GM12878 (cell line): ENCODE measurements at regions of chr5 and their contacts with region 1.

Region 1: GRCh38 chr5:77972469-77973252 is 196.5 kb upstream of the TBCA start:
- DNase-seq: no peak
- ATAC-seq: peak; percentile 91
- H3K4me3 ChIP-seq: peak overlapping the region; percentile 61
- H3K27ac ChIP-seq: no peak overlapping the region
- H3K4me1 ChIP-seq: peaks cover 8% of the 10 kb centered on the region
- H3K27me3 ChIP-seq: 0 out of 4 replicates have a peak, but pooled peaks cover 0 to 4% of the 10 kb centered on the region in 2 experiments
- CTCF ChIP-seq: peak; percentile 50 to 53 (median 51); a peak in 5 of 6 replicates
- EP300 ChIP-seq: no peak
- POLR2A ChIP-seq: no peak
- RAD21 ChIP-seq: peak; percentile 76

Region 2: GRCh38 chr5:77645158-77645994 is 327.3 kb before region 1 on chr5:
- CTCF ChIA-PET with region 1: no interaction called
- POLR2A ChIA-PET with region 1: no interaction called
- RAD21 ChIA-PET with region 1: no interaction called
- SMC1A ChIA-PET with region 1: no interaction called
- in situ Hi-C with region 1: no loop called
- intact Hi-C with region 1: loop called (anchors 10 kb)
- DNase-seq: no peak
- ATAC-seq: peak; percentile 99
- H3K4me3 ChIP-seq: peak overlapping the region; percentile 53; the same call in 1 of the 2 replicates
- H3K27ac ChIP-seq: no peak overlapping the region
- H3K4me1 ChIP-seq: no peaks in the 10 kb centered on the region
- H3K27me3 ChIP-seq: peaks cover 3 to 26% of the 10 kb centered on the region in 2 experiments
- CTCF ChIP-seq: peak; percentile 51 to 55 (median 52); a peak in 5 of 6 replicates
- EP300 ChIP-seq: no peak
- POLR2A ChIP-seq: no peak
- RAD21 ChIP-seq: peak; percentile 67

Region 3: DNA sequence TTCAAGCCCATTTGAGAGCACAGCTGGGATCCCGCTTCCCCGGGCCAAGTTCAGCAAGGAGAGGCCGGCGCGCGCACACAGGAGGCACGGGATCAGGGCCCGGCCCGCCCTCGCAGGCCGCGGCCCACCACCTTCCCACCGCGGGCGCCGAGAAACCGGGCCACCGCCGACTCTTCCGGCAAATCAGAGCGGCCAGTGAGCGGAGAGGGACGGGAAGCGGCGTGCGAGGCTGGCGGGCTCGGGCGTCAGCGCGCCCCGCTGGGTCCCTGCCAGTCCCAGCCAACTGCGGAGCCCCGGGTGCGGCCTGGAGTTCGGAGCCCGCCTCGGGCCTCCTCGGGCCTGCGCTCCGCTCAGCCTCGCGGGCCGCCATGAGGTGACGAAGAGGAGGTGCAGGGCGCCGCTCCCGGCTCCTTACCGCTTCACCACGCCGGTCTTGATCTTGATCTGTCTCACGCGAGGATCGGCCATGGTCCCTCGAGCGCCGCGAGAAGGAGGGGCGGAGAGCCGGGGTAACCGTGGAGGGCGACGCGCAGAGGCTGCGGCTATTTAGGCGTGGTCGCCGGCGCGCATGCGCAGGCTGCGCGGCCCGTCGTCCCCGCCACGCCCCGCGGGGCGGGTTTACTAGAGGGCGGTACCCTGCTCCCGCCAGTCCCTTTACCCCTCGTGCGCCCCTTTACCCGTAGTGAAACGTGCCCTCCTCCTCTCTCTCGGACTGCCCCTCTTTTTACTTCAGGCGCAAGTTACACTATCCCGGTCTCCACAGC is 196.7 kb before region 1 on chr5 and contains the start of gene TBCA:
- CTCF ChIA-PET with region 1: no interaction called
- POLR2A ChIA-PET with region 1: no interaction called
- RAD21 ChIA-PET with region 1: interaction called, 3 read pairs
- SMC1A ChIA-PET with region 1: interaction called, 3 read pairs
- in situ Hi-C with region 1: no loop called
- intact Hi-C with region 1: loop called (anchors 10 kb)
- DNase-seq: peak; percentile 78
- ATAC-seq: peak; percentile 88
- H3K4me3 ChIP-seq: peak within 1 kb of the TSS; percentile 89
- H3K27ac ChIP-seq: peak within 1 kb of the TSS; percentile 95
- H3K4me1 ChIP-seq: peaks cover 4% of the 10 kb centered on the region; the same call in 1 of the 2 replicates
- H3K27me3 ChIP-seq: no peaks in the 10 kb centered on the region
- CTCF ChIP-seq: peak in 2 of 3 experiments; percentile 31 to 39; a peak in 3 of 6 replicates
- EP300 ChIP-seq: no peak; a peak in 1 of 4 replicates
- POLR2A ChIP-seq: peak; percentile 86
- RAD21 ChIP-seq: peak; percentile 27; the same call in 1 of the 2 replicates
- polyA plus RNA-seq, gene TBCA: 567 to 647 TPM

Region 4: DNA sequence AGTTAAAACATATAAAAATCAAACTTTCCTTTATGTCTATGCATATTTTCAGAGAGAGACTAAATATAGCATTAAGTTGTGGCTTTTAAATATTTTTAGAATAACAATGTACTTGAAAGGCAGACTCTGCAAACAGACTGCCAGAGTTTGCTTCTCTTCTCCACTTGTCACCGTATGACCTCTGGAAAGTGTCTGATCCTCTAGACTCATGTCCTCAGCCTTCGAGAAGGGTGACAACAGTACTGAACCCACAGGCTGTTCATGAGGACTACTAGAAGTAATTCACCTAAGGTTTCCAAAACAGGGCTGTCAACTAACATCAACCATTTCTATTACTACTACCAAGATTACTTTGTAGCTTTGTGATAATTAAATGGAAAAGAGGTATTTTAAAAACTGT is 28.8 kb before region 1 on chr5:
- CTCF ChIA-PET with region 1: interaction called, 11 read pairs
- POLR2A ChIA-PET with region 1: interaction called, 4 read pairs
- RAD21 ChIA-PET with region 1: interaction called, 3 read pairs
- SMC1A ChIA-PET with region 1: interaction called, 23 read pairs
- in situ Hi-C with region 1: no loop called
- intact Hi-C with region 1: no loop called
- DNase-seq: no peak
- ATAC-seq: no peak
- H3K4me3 ChIP-seq: no peak overlapping the region
- H3K27ac ChIP-seq: no peak overlapping the region
- H3K4me1 ChIP-seq: no peaks in the 10 kb centered on the region
- H3K27me3 ChIP-seq: no peaks in the 10 kb centered on the region; a peak in 1 of 4 replicates
- CTCF ChIP-seq: no peak
- EP300 ChIP-seq: no peak
- POLR2A ChIP-seq: no peak
- RAD21 ChIP-seq: no peak

Region 5: DNA sequence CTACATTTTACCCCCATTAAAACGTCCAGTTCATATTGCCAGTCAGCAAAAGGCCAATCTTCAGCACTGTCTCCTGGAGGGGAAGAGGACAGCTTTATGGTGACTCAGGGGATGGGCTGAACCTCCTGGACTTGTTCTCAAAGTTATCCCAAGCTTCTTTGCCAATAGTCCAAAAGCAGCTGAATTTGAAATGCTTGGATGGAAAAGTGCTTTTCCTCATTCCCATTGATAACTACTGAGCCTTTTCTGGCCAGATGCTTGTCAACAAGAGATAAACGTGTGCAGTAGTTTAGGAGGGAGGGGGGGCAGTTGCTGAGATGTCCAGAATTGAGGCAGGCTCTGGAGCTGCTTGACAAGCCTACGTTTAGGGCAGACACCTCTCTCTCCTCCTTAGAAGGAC is 1974.9 kb after region 1 on chr5:
- CTCF ChIA-PET with region 1: no interaction called
- POLR2A ChIA-PET with region 1: no interaction called
- RAD21 ChIA-PET with region 1: no interaction called
- SMC1A ChIA-PET with region 1: no interaction called
- in situ Hi-C with region 1: no loop called
- intact Hi-C with region 1: no loop called
- DNase-seq: no peak
- ATAC-seq: no peak
- H3K4me3 ChIP-seq: no peak overlapping the region
- H3K27ac ChIP-seq: no peak overlapping the region
- H3K4me1 ChIP-seq: no peaks in the 10 kb centered on the region
- H3K27me3 ChIP-seq: no peaks in the 10 kb centered on the region; a peak in 1 of 4 replicates
- CTCF ChIP-seq: no peak
- EP300 ChIP-seq: no peak
- POLR2A ChIP-seq: no peak
- RAD21 ChIP-seq: no peak